PC-9 (cell line): ENCODE measurements at regions of chr15 and their contacts with region 1.

Region 1: DNA sequence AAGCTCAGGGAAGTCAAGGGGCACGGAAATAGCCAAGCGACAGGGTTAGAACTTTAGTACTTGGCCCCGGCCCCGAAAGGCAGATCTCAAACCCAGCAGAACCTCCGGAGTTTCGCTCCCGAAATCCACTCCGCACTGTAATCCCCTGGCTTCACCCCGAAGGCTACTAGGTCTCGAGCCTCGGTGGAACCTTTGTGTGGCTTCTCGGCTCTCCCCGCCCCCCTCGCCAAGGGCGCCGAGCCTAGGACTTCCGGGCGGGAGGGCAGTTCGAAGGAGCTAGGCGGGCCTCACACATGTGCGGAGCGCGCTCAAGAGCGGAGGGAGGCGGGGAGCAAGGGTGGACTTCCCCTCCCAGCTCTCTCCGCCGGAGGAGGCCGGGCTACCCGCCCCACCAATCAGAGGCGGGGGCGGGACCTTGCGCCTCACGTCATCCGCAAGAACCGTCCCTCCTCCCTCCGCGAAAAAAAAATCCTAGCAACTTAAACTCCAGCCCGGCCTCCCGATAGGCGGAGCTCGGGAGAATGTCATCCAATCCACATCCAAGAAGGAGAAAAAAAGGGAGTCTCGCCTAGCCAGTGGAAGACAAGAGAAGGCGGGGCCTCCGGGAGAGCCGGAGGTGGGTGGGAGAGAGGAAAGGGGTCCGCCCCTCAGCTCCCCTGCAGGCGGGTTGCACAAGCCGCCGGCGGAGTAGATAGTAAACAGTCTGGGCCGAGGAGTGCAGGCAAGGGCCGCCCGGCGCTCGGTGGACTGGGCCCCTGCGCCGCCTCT is 2.4 kb upstream of the SIN3A start:
- DNase-seq: peak; percentile 98
- H3K4me3 ChIP-seq: peak overlapping the region; percentile 82
- H3K27ac ChIP-seq: peak overlapping the region; percentile 84
- H3K4me1 ChIP-seq: peaks cover 21% of the 10 kb centered on the region
- H3K27me3 ChIP-seq: no peaks in the 10 kb centered on the region
- CTCF ChIP-seq: no peak

Region 2: GRCh38 chr15:74937596-74938296 is 516.1 kb before region 1 on chr15 and contains the start of gene COX5A:
- CTCF ChIA-PET with region 1: no interaction called
- POLR2A ChIA-PET with region 1: interaction called, 29 read pairs
- intact Hi-C with region 1: no loop called
- DNase-seq: peak; percentile 90 to 95
- H3K4me3 ChIP-seq: peak within 1 kb of the TSS; percentile 90
- H3K27ac ChIP-seq: peak within 1 kb of the TSS; percentile 88
- H3K4me1 ChIP-seq: peaks cover 14% of the 10 kb centered on the region
- H3K27me3 ChIP-seq: no peaks in the 10 kb centered on the region
- CTCF ChIP-seq: no peak
- total RNA-seq, gene COX5A: 177 and 247 TPM in 2 replicates

Region 3: GRCh38 chr15:75172284-75172820 is 281.5 kb before region 1 on chr15:
- CTCF ChIA-PET with region 1: no interaction called
- POLR2A ChIA-PET with region 1: no interaction called
- intact Hi-C with region 1: no loop called
- DNase-seq: peak in 1 of 2 experiments; percentile 39
- H3K4me3 ChIP-seq: no peak overlapping the region
- H3K27ac ChIP-seq: peak overlapping the region; percentile 72
- H3K4me1 ChIP-seq: peaks cover 79% of the 10 kb centered on the region
- H3K27me3 ChIP-seq: no peaks in the 10 kb centered on the region
- CTCF ChIP-seq: no peak

Region 4: GRCh38 chr15:75367913-75368688 is 85.8 kb before region 1 on chr15 and contains the start of gene MAN2C1:
- CTCF ChIA-PET with region 1: interaction called, 6 read pairs
- POLR2A ChIA-PET with region 1: interaction called, 39 read pairs
- intact Hi-C with region 1: loop called (anchors 5 kb)
- DNase-seq: peak; percentile 93 to 97
- H3K4me3 ChIP-seq: peak within 1 kb of the TSS; percentile 63
- H3K27ac ChIP-seq: peak within 1 kb of the TSS; percentile 79
- H3K4me1 ChIP-seq: peaks cover 25% of the 10 kb centered on the region
- H3K27me3 ChIP-seq: no peaks in the 10 kb centered on the region
- CTCF ChIP-seq: no peak; the same call in 1 of the 2 replicates
- total RNA-seq, gene MAN2C1: 94.3 and 143 TPM in 2 replicates

Region 5: DNA sequence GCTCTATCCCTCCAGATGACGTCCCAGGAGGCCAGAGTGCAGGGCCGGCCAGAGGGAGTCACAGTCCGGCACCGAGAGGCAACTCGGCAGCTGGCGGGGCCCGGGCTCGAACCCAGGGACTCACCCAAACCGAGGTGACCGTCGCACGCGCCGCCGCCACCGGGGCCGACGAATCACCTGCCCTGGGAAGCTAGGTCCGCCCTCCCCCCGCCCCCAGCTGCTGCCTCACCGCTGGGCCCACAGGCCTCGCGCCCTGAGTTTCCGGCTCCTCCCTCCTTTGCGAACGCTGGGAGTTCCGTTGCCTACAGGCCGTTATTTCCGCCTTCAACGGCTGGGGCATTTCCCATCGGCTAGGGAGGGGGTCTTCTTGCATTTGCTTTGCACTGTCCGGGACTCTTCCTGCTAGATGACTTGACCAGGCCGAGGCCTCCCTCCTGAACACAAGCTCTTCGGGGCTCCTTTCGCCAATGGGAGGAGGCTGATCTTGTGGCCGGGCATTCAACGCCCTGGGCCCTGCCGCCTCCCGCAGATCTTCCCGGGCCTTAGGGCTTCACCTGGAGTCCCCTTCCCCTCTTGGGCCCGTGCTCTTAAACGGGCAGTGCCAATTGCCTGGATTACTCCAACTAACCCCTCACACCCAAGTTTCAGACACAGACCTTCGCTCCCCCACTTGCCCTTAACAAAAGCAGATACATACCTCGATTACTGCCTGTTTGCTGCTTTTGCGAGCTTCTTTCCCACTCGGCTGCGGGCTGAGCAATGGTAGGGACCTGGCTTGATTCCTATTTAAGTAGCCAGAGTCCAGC is 171.9 kb after region 1 on chr15 and contains the start of gene SNUPN:
- CTCF ChIA-PET with region 1: interaction called, 3 read pairs
- POLR2A ChIA-PET with region 1: interaction called, 13 read pairs
- intact Hi-C with region 1: no loop called
- DNase-seq: peak; percentile 76 to 87
- H3K4me3 ChIP-seq: peak within 1 kb of the TSS; percentile 69
- H3K27ac ChIP-seq: peak within 1 kb of the TSS; percentile 73
- H3K4me1 ChIP-seq: peaks cover 22% of the 10 kb centered on the region
- H3K27me3 ChIP-seq: no peaks in the 10 kb centered on the region
- CTCF ChIP-seq: no peak
- total RNA-seq, gene SNUPN: 37.6 and 40.0 TPM in 2 replicates

Region 6: GRCh38 chr15:75666823-75667501 is 213.1 kb after region 1 on chr15:
- CTCF ChIA-PET with region 1: no interaction called
- POLR2A ChIA-PET with region 1: no interaction called
- intact Hi-C with region 1: loop called (anchors 5 kb)
- DNase-seq: peak; percentile 89 to 98
- H3K4me3 ChIP-seq: no peak overlapping the region; the same call in 1 of the 2 replicates
- H3K27ac ChIP-seq: peak overlapping the region; percentile 99
- H3K4me1 ChIP-seq: peaks cover 100% of the 10 kb centered on the region
- H3K27me3 ChIP-seq: no peaks in the 10 kb centered on the region
- CTCF ChIP-seq: no peak